Ascending aorta (tissue), 2 donors: ENCODE measurements at regions of chr16 and their contacts with region 1.

Region 1: GRCh38 chr16:13793841-13794409 is 126.0 kb upstream of the ERCC4 start:
- DNase-seq: peak in 1 of 2 donors; percentile 64
- H3K4me3 ChIP-seq: no peak overlapping the region
- H3K27ac ChIP-seq: peak overlapping the region in 1 of 2 donors; percentile 77
- H3K4me1 ChIP-seq: peaks cover 18 to 22% of the 10 kb centered on the region in 2 donors
- H3K27me3 ChIP-seq: no peaks in the 10 kb centered on the region
- CTCF ChIP-seq: peak in 1 of 3 experiments; percentile 24

Region 2: GRCh38 chr16:13909872-13910303 is 116.0 kb after region 1 on chr16:
- intact Hi-C with region 1: loop called (anchors 2 kb)
- DNase-seq: peak; percentile 61 to 94
- H3K4me3 ChIP-seq: no peak overlapping the region
- H3K27ac ChIP-seq: peak overlapping the region; percentile 64 to 73
- H3K4me1 ChIP-seq: peaks cover 0 to 15% of the 10 kb centered on the region in 2 donors
- H3K27me3 ChIP-seq: no peaks in the 10 kb centered on the region
- CTCF ChIP-seq: peak in 1 of 3 experiments; percentile 9